Body of pancreas (tissue), 4 donors: ENCODE measurements at regions of chr1 and their contacts with region 1.

Region 1: GRCh38 chr1:159798893-159799292 is 3.3 kb upstream of the FCRL6 start:
- DNase-seq: peak; percentile 71 to 83 (median 74)
- ATAC-seq: peak; percentile 90
- H3K4me3 ChIP-seq: no peak overlapping the region
- H3K27ac ChIP-seq: no peak overlapping the region
- H3K4me1 ChIP-seq: no peaks in the 10 kb centered on the region
- H3K27me3 ChIP-seq: no peaks in the 10 kb centered on the region
- CTCF ChIP-seq: peak; percentile 59 to 87 (median 86)
- POLR2A ChIP-seq: no peak

Region 2: GRCh38 chr1:159891275-159892157 is 92.6 kb after region 1 on chr1:
- intact Hi-C with region 1: loop called (anchors 5 kb)
- DNase-seq: peak; percentile 87 to 89 (median 89)
- ATAC-seq: peak; percentile 100
- H3K4me3 ChIP-seq: no peak overlapping the region
- H3K27ac ChIP-seq: no peak overlapping the region
- H3K4me1 ChIP-seq: no peaks in the 10 kb centered on the region
- H3K27me3 ChIP-seq: no peaks in the 10 kb centered on the region
- CTCF ChIP-seq: peak; percentile 95 to 100 (median 99)
- POLR2A ChIP-seq: no peak

Region 3: DNA sequence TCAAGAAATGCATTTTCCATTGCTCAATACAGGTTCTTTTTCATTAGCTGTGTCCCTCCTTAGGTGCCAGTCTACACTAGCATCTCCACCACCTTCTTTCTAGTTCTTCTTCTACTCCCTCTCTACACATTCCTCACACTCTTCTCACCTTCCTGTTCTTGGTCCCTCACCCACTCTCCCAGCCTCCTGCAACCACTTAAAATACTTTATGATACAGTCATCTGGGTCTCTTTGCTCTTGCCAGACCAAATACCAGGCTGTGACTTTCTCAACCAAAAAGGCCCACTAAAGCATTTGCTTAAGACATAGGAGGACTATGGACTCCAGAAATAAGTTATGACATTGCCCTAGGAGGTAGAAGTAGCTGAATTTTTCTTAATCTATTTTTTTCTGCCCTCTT is 197.8 kb after region 1 on chr1:
- intact Hi-C with region 1: no loop called
- DNase-seq: no peak
- ATAC-seq: no peak
- H3K4me3 ChIP-seq: no peak overlapping the region
- H3K27ac ChIP-seq: no peak overlapping the region
- H3K4me1 ChIP-seq: no peaks in the 10 kb centered on the region
- H3K27me3 ChIP-seq: no peaks in the 10 kb centered on the region
- CTCF ChIP-seq: no peak
- POLR2A ChIP-seq: no peak

Region 4: DNA sequence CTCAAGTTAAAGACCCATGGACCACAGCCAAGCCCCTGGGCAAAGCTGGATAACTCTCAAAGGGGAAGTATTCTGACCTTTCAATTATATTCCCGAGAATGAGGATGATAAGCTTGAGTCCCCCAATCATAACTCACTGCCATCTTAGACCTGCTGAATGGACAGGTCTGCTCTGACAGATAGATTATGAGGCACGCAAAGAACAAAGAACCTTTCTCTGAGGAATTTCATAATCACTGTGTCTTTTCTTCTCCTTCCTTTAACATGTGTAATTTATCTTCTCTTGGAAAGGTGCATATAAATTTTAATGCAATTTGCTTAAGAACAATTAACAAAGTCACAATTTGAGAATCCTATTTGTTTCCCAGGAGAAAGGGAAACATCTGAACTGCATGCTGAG is 210.9 kb after region 1 on chr1:
- intact Hi-C with region 1: loop called (anchors 5 kb)
- DNase-seq: no peak
- ATAC-seq: no peak
- H3K4me3 ChIP-seq: no peak overlapping the region
- H3K27ac ChIP-seq: no peak overlapping the region
- H3K4me1 ChIP-seq: no peaks in the 10 kb centered on the region
- H3K27me3 ChIP-seq: no peaks in the 10 kb centered on the region
- CTCF ChIP-seq: no peak
- POLR2A ChIP-seq: no peak